GM18951 (cell line): ENCODE measurements at regions of chr6 and their contacts with region 1.

Region 1: DNA sequence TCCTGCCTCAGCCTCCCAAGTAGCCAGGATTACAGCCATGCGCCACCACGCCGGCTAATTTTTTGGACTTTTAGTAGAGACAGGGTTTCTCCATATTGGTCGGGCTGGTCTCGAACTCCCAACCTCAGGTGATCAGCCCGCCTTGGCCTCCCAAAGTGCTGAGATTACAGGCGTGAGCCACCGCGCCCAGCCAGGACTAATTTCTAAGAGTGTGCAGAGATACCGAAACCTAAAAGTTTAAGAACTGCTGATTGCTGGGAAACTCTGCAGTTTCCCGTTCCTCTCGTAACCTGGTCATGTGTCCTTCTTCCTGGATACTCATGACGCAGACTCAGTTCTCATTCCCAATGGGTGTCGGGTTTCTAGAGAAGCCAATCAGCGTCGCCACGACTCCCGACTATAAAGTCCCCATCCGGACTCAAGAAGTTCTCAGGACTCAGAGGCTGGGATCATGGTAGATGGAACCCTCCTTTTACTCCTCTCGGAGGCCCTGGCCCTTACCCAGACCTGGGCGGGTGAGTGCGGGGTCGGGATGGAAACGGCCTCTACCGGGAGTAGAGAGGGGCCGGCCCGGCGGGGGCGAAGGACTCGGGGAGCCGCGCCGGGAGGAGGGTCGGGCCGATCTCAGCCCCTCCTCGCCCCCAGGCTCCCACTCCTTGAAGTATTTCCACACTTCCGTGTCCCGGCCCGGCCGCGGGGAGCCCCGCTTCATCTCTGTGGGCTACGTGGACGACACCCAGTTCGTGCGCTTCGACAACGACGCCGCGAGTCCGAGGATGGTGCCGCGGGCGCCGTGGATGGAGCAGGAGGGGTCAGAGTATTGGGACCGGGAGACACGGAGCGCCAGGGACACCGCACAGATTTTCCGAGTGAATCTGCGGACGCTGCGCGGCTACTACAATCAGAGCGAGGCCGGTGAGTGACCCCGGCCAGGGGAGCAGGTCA is at the start of gene HLA-E:
- POLR2A ChIP-seq: peak; percentile 99

Region 2: DNA sequence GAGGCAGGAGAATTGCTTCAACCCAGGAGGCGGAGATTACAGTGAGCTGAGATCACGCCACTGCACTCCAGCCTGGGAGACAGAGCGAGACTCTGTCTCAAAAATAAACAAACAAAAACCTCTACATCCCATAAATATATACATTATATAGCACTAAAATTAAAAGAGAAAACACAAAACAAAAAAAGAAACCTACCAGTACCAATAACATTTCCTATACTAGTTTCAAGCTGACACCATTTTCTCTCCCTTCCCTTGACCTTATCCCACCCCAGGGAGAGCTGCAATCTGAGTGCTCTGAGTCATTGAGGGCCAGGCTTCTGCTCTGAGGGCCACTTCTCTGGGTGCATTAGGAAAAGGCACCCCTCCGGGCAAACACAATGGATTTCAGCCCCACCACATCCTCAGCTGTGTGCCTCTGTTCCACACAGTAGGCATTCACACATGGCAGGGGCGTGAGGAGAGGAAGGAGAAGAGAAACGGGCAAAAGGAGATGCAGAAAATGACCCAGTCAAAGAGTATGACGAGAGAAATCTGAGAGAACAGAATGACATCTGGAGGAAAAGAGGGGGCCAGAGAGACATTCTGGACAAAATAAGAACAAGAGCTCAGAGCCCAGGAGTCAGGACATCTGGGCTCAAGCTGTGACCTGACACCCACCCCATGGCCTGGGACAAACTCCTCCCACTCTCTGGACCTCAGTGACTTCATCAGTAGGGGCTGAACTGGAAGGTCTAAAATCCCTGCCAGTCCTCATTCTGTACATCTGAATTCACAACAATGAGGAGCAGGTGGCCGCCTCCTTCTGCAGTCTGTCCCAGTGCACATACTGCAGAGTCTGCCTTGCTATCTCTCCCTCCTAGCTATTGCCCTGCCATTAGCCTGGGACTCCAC is 294.3 kb before region 1 on chr6:
- in situ Hi-C with region 1: no loop called
- POLR2A ChIP-seq: no peak

Region 3: GRCh38 chr6:30533460-30534294 is 44.3 kb after region 1 on chr6:
- in situ Hi-C with region 1: loop called (anchors 5 kb)
- POLR2A ChIP-seq: no peak

Region 4: GRCh38 chr6:30793521-30794194 is 304.3 kb after region 1 on chr6:
- in situ Hi-C with region 1: no loop called
- POLR2A ChIP-seq: no peak